HCT116 (cell line): ENCODE measurements at regions of chr1 and their contacts with region 1.

Region 1: GRCh38 chr1:48677306-48678287 is 99.1 kb downstream of the BEND5 start:
- DNase-seq: peak; percentile 37
- ATAC-seq: peak; percentile 91
- H3K4me3 ChIP-seq: no peak overlapping the region
- H3K27ac ChIP-seq: no peak overlapping the region
- H3K4me1 ChIP-seq: no peaks in the 10 kb centered on the region
- H3K27me3 ChIP-seq: peaks cover 33% of the 10 kb centered on the region
- CTCF ChIP-seq: peak; percentile 36 to 75 (median 73); a peak in 5 of 6 replicates
- POLR2A ChIP-seq: no peak
- RAD21 ChIP-seq: peak; percentile 43

Region 2: GRCh38 chr1:48572646-48573261 is 104.8 kb before region 1 on chr1:
- CTCF ChIA-PET with region 1: interaction called, 9 read pairs
- POLR2A ChIA-PET with region 1: no interaction called
- RAD21 ChIA-PET with region 1: no interaction called
- intact Hi-C with region 1: loop called (anchors 5 kb)
- DNase-seq: peak; percentile 35
- ATAC-seq: peak; percentile 96
- H3K4me3 ChIP-seq: no peak overlapping the region
- H3K27ac ChIP-seq: no peak overlapping the region
- H3K4me1 ChIP-seq: no peaks in the 10 kb centered on the region
- H3K27me3 ChIP-seq: peaks cover 40% of the 10 kb centered on the region
- CTCF ChIP-seq: peak; percentile 52 to 74 (median 68)
- POLR2A ChIP-seq: no peak
- RAD21 ChIP-seq: peak; percentile 73

Region 3: GRCh38 chr1:48657413-48657812 is 20.2 kb before region 1 on chr1:
- CTCF ChIA-PET with region 1: no interaction called
- POLR2A ChIA-PET with region 1: no interaction called
- RAD21 ChIA-PET with region 1: no interaction called
- intact Hi-C with region 1: no loop called
- DNase-seq: no peak
- ATAC-seq: no peak
- H3K4me3 ChIP-seq: no peak overlapping the region
- H3K27ac ChIP-seq: no peak overlapping the region
- H3K4me1 ChIP-seq: no peaks in the 10 kb centered on the region
- H3K27me3 ChIP-seq: peaks cover 28% of the 10 kb centered on the region
- CTCF ChIP-seq: no peak
- POLR2A ChIP-seq: no peak
- RAD21 ChIP-seq: no peak

Region 4: DNA sequence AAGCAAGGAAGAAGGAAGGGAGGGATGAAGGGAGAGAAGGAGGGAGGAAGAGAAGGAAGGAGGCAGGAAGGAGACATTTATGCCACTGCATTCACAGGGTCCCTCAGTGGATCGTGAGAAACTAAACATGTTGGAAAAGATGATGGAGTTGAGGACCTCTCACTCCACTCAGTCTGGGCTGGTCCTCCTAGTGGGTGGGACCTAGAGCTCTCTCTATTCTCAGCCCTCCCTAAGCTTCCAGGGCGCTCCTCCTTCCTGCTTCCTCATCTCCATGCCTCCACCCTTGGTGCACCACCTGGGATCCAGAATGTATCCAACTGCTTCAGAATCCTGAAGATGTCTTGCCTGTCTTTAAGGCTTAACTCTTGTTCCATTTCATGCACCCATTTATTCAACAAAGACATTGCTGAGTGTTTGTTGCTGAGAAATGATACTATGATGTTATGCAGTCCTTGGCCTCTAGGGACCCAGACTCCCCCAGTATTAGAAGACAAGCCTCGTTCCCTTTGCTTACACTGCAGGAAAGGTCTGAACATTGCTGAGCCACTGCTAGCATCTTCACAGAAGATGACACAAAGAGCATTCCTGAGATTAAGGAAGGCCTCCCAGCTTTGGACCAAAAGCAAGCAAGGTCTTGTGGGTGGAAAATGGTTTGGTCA is 10.6 kb after region 1 on chr1:
- CTCF ChIA-PET with region 1: interaction called, 16 read pairs
- POLR2A ChIA-PET with region 1: no interaction called
- RAD21 ChIA-PET with region 1: interaction called in 1 of 2 experiments, 3 read pairs
- intact Hi-C with region 1: no loop called
- DNase-seq: peak; percentile 6
- ATAC-seq: peak; percentile 91
- H3K4me3 ChIP-seq: no peak overlapping the region
- H3K27ac ChIP-seq: no peak overlapping the region
- H3K4me1 ChIP-seq: no peaks in the 10 kb centered on the region
- H3K27me3 ChIP-seq: peaks cover 17% of the 10 kb centered on the region
- CTCF ChIP-seq: peak in 2 of 3 experiments; percentile 48 to 52; a peak in 4 of 6 replicates
- POLR2A ChIP-seq: no peak
- RAD21 ChIP-seq: no peak

Region 5: GRCh38 chr1:48697066-48697707 is 19.6 kb after region 1 on chr1:
- CTCF ChIA-PET with region 1: interaction called, 21 read pairs
- POLR2A ChIA-PET with region 1: interaction called, 4 read pairs
- RAD21 ChIA-PET with region 1: no interaction called
- intact Hi-C with region 1: no loop called
- DNase-seq: peak; percentile 18
- ATAC-seq: peak; percentile 83
- H3K4me3 ChIP-seq: no peak overlapping the region
- H3K27ac ChIP-seq: no peak overlapping the region
- H3K4me1 ChIP-seq: peaks cover 0 to 7% of the 10 kb centered on the region in 2 experiments; a peak in 2 of 4 replicates
- H3K27me3 ChIP-seq: peaks cover 42% of the 10 kb centered on the region
- CTCF ChIP-seq: peak; percentile 51 to 93 (median 92)
- POLR2A ChIP-seq: no peak
- RAD21 ChIP-seq: peak; percentile 55

Region 6: DNA sequence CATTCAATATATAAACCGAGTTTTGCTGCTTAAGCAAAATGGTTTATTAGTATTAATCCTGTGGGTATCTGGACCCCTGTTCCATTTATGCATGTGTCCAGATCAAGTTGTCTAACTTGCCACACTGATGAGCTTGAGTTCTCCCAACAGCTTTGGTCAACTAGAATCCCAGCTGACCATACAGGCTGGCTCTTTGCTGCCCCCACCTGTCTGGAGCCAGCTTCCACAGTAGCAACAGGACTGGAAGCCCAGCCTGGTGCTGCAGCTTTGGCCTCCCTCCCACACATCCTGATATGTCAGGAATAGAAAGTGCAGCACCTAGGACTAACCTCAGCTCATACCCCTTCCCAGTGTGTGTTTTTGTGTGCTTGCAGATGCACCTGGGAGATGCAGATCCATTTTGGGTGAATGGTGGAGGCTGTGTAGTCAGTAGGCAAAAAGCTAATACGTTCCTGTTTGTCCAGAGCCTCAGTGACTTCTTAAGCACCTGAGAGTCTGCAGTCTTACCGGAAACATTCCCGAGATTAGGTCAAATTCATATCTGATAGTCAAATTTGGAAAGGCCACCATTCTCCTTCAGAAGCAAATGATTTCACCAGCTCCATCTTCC is 140.0 kb after region 1 on chr1:
- CTCF ChIA-PET with region 1: interaction called, 20 read pairs
- POLR2A ChIA-PET with region 1: no interaction called
- RAD21 ChIA-PET with region 1: interaction called, 3 read pairs
- intact Hi-C with region 1: loop called (anchors 2 kb)
- DNase-seq: peak; percentile 8
- ATAC-seq: peak; percentile 96
- H3K4me3 ChIP-seq: no peak overlapping the region
- H3K27ac ChIP-seq: no peak overlapping the region
- H3K4me1 ChIP-seq: no peaks in the 10 kb centered on the region
- H3K27me3 ChIP-seq: no peaks in the 10 kb centered on the region
- CTCF ChIP-seq: peak; percentile 12 to 80 (median 68); a peak in 4 of 6 replicates
- POLR2A ChIP-seq: no peak
- RAD21 ChIP-seq: peak; percentile 53

Region 7: DNA sequence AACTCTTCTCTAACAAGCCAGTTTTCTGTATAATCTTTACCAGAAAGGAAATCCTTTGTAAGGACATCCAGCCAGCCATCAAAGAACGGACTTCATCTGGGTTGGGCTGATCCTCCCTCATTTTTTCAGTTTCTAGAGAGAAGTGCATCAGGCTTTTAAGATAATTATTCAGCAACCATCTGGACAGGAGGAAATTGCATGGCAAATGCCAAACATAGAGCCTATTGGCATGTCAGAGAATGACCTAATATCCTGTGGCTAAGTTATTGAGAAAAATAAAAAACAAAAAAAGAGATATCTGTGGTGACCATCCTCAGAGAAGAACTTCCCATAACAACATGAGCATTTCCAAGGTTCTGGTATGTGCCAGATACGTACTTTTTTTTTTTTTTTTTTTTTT is 174.0 kb after region 1 on chr1:
- CTCF ChIA-PET with region 1: no interaction called
- POLR2A ChIA-PET with region 1: no interaction called
- RAD21 ChIA-PET with region 1: no interaction called
- intact Hi-C with region 1: no loop called
- DNase-seq: no peak
- ATAC-seq: no peak
- H3K4me3 ChIP-seq: no peak overlapping the region
- H3K27ac ChIP-seq: no peak overlapping the region
- H3K4me1 ChIP-seq: peaks cover 0 to 7% of the 10 kb centered on the region in 2 experiments; a peak in 1 of 4 replicates
- H3K27me3 ChIP-seq: no peaks in the 10 kb centered on the region
- CTCF ChIP-seq: no peak
- POLR2A ChIP-seq: no peak
- RAD21 ChIP-seq: no peak

Region 8: DNA sequence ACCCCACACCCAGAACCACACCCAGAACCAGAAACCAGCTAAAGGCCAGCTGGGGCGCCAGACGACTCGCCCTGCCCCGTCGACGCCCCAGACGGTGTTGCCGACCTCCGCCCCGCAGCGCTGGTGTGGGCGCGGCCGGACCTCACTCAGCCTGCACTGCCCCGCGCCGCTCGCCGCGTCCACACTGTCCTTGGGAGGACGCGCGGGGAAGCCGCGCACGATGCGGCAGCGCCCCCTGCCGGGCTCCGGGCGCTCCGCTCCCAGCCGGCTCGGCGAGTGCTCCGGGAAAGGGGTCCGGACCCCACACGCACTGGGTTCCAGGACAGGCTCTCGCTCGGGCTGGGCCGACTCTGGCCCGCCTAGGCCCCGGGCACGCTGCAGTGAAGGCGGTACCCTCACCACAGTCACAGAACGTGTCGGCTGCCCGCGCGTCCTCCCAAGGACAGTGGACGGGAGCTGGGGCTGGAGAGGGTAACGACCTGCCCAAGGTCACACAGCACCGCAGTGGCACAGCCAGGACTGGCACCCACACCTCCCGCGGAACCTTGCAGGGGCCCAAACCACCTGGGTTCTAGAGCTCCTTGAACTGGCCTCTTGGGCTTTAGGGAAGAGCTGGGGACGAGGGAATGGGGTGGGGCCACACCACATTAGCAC is 1655.5 kb after region 1 on chr1:
- CTCF ChIA-PET with region 1: interaction called, 14 read pairs
- POLR2A ChIA-PET with region 1: no interaction called
- RAD21 ChIA-PET with region 1: no interaction called
- intact Hi-C with region 1: loop called (anchors 5 kb)
- DNase-seq: no peak
- ATAC-seq: peak; percentile 90
- H3K4me3 ChIP-seq: peak overlapping the region; percentile 54 to 65
- H3K27ac ChIP-seq: peak overlapping the region; percentile 59; the same call in 1 of the 2 replicates
- H3K4me1 ChIP-seq: peaks cover 3 to 13% of the 10 kb centered on the region in 2 experiments; a peak in 2 of 4 replicates
- H3K27me3 ChIP-seq: peaks cover 31% of the 10 kb centered on the region; the same call in 1 of the 2 replicates
- CTCF ChIP-seq: peak; percentile 71 to 95 (median 72)
- POLR2A ChIP-seq: no peak
- RAD21 ChIP-seq: peak; percentile 82

Region 9: GRCh38 chr1:50348449-50349241 is 1671.0 kb after region 1 on chr1:
- CTCF ChIA-PET with region 1: interaction called, 4 read pairs
- POLR2A ChIA-PET with region 1: no interaction called
- RAD21 ChIA-PET with region 1: interaction called in 1 of 2 experiments, 4 read pairs
- intact Hi-C with region 1: loop called (anchors 1 kb)
- DNase-seq: peak; percentile 48
- ATAC-seq: peak; percentile 92
- H3K4me3 ChIP-seq: no peak overlapping the region
- H3K27ac ChIP-seq: no peak overlapping the region
- H3K4me1 ChIP-seq: no peaks in the 10 kb centered on the region
- H3K27me3 ChIP-seq: peaks cover 3% of the 10 kb centered on the region; the same call in 1 of the 2 replicates
- CTCF ChIP-seq: peak; percentile 69 to 87 (median 79)
- POLR2A ChIP-seq: no peak
- RAD21 ChIP-seq: peak; percentile 87